Thyroid gland (tissue), 4 donors: ENCODE measurements at regions of chr12 and their contacts with region 1.

Region 1: DNA sequence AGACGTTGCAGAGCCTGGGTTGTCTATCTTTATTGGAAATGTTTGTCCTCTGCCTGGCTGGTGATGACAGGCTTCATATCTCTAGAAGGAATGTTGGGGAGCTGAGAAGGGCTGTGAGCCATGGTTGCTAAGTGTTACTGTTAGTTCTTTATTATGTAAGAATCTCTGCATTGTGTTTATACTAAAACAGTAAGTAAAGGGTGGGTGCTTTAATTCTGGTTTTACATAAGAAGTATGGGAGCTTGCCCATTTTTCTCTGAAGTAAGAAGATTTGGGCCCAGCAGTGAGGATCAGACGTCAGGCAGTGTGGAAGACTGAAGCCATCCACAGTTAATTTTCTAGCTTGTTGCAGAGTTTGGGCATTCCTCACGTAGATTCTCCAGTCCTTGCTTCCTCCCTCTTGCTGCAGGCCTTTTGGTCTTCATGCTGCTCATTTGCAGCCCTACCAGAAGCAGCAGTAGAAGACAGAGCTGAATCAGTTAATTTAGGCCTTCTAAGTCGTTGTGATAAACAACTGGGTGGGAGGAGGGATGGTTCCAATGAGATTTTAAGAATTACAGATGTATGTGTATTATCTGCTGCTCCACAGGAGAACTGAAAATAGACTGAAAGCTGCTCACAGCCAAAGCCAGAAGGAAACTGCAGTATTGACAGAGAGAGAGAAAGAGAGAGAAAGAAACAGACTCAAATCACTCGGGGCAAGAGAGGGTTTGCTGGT is 21.4 kb downstream of the WNT5B start:
- DNase-seq: no peak
- H3K4me3 ChIP-seq: no peak overlapping the region
- H3K27ac ChIP-seq: no peak overlapping the region
- H3K4me1 ChIP-seq: no peaks in the 10 kb centered on the region
- H3K27me3 ChIP-seq: no peaks in the 10 kb centered on the region
- CTCF ChIP-seq: no peak
- POLR2A ChIP-seq: no peak

Region 2: GRCh38 chr12:1605129-1606020 is 45.0 kb before region 1 on chr12:
- intact Hi-C with region 1: no loop called
- DNase-seq: peak; percentile 78 to 81
- H3K4me3 ChIP-seq: peak overlapping the region; percentile 12 to 22 (median 21)
- H3K27ac ChIP-seq: peak overlapping the region; percentile 90 to 91 (median 90)
- H3K4me1 ChIP-seq: peaks cover 8 to 23% of the 10 kb centered on the region in 2 donors
- H3K27me3 ChIP-seq: no peaks in the 10 kb centered on the region
- CTCF ChIP-seq: peak; percentile 50 to 89 (median 78)
- POLR2A ChIP-seq: peak in 1 of 2 donors; percentile 63

Region 3: GRCh38 chr12:1690578-1691122 is 40.2 kb after region 1 on chr12 and contains the start of gene ADIPOR2:
- intact Hi-C with region 1: loop called (anchors 5 kb)
- DNase-seq: peak; percentile 95 to 96
- H3K4me3 ChIP-seq: peak within 1 kb of the TSS; percentile 82 to 99 (median 96)
- H3K27ac ChIP-seq: peak within 1 kb of the TSS; percentile 86 to 97 (median 91)
- H3K4me1 ChIP-seq: peaks cover 9% of the 10 kb centered on the region in 2 donors
- H3K27me3 ChIP-seq: no peaks in the 10 kb centered on the region
- CTCF ChIP-seq: peak in 1 of 6 experiments; percentile 12
- POLR2A ChIP-seq: peak; percentile 22 to 95
- total RNA-seq, gene ADIPOR2: 46.0 to 59.3 (median 52.4) TPM

Region 4: DNA sequence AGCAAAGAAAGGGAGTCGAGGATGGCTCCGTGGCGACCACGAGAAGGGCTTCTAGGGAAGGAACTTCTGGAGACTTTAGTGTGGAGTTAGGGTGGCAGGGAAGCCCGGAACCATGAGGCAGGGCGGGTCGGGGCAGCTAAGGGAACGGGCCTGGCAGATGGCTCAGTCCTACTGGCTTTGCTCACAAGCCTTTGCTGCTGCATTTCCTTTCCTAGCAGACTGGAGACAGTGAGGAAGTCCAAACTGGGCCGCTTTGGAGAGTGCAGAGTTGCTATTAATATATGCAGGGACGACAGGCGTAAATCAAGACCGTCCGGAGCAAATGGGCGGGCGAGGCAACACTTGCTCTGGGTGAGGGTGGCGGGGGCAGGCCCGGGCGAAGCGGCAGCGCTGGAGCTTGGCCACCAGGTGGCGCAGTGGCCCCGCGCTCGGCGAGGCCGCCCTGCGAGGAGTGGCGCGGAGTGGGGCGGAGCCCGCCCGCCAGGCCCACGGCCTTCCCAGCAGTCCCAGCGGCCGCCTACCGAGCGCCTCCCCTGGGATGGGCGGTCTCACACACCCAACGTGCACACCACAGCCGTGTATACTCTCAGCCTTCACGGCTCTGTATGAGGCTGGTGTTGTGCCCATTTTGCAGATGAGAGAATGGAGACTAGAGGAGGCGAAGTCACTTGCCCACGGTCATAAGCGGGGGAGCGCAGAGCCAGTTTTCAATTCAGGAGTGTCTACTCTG is 145.5 kb after region 1 on chr12:
- intact Hi-C with region 1: loop called (anchors 2 kb)
- DNase-seq: peak; percentile 92 to 93
- H3K4me3 ChIP-seq: peak overlapping the region; percentile 48 to 79 (median 57)
- H3K27ac ChIP-seq: peak overlapping the region; percentile 43 to 67 (median 51)
- H3K4me1 ChIP-seq: peaks cover 12 to 28% of the 10 kb centered on the region in 2 donors
- H3K27me3 ChIP-seq: no peaks in the 10 kb centered on the region
- CTCF ChIP-seq: peak; percentile 53 to 99 (median 98)
- POLR2A ChIP-seq: peak; percentile 49 to 67

Region 5: GRCh38 chr12:1939801-1940607 is 289.6 kb after region 1 on chr12:
- intact Hi-C with region 1: loop called (anchors 5 kb)
- DNase-seq: peak; percentile 85 to 89
- H3K4me3 ChIP-seq: no peak overlapping the region
- H3K27ac ChIP-seq: no peak overlapping the region
- H3K4me1 ChIP-seq: peaks cover 22 to 28% of the 10 kb centered on the region in 2 donors
- H3K27me3 ChIP-seq: no peaks in the 10 kb centered on the region
- CTCF ChIP-seq: peak; percentile 88 to 95 (median 92)
- POLR2A ChIP-seq: no peak